Adrenal gland (tissue), 19 donors: ENCODE measurements at regions of chr19 and their contacts with region 1.

Region 1: GRCh38 chr19:1549332-1549945 is 18.7 kb downstream of the MEX3D start:
- DNase-seq: no peak
- H3K4me3 ChIP-seq: no peak overlapping the region
- H3K27ac ChIP-seq: no peak overlapping the region
- H3K4me1 ChIP-seq: no peaks in the 10 kb centered on the region
- H3K27me3 ChIP-seq: no peaks in the 10 kb centered on the region
- CTCF ChIP-seq: no peak
- POLR2A ChIP-seq: no peak

Region 2: GRCh38 chr19:1478934-1479707 is 70.3 kb before region 1 on chr19 and contains the start of gene C19orf25:
- intact Hi-C with region 1: no loop called
- DNase-seq: peak; percentile 92 to 96 (median 93)
- H3K4me3 ChIP-seq: peak within 1 kb of the TSS in 3 of 4 donors; percentile 56 to 91 (median 70)
- H3K27ac ChIP-seq: peak within 1 kb of the TSS in 3 of 5 donors; percentile 54 to 74 (median 61)
- H3K4me1 ChIP-seq: peaks cover 11 to 22% of the 10 kb centered on the region in 2 donors
- H3K27me3 ChIP-seq: no peaks in the 10 kb centered on the region
- CTCF ChIP-seq: no peak
- POLR2A ChIP-seq: peak; percentile 47 to 63
- total RNA-seq, gene C19orf25: 26.9 to 60.4 (median 35.6) TPM

Region 3: DNA sequence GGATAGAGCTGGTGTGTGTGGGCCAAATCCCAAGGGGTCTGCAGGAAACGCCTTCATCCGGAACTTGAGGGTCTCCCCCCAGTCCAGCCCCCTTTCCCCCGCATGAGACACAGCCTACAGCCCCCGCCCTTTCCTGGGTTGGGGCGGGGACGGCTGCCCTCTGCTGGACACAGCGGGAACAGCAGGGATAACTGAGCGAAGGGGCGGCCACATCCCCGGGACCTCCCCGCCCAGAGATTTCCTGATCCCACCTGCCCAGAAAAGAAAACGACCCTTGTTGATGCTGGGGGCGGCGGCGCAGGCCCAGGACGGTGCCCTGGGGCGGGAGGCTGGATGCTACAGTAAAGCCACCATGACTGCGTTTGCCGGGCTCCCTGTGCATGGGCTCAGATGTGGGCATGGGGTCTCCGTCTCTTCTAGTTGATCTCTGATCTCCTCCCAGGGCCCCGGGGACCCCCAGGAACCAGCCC is 218.1 kb after region 1 on chr19:
- intact Hi-C with region 1: loop called in 1 of 2 experiments (anchors 5 kb)
- DNase-seq: peak in 5 of 7 donors; percentile 28 to 56 (median 45)
- H3K4me3 ChIP-seq: no peak overlapping the region
- H3K27ac ChIP-seq: no peak overlapping the region
- H3K4me1 ChIP-seq: no peaks in the 10 kb centered on the region
- H3K27me3 ChIP-seq: peaks cover 69% of the 10 kb centered on the region
- CTCF ChIP-seq: peak; percentile 75 to 98 (median 90)
- POLR2A ChIP-seq: no peak